PC-9 (cell line): ENCODE measurements at regions of chr17 and their contacts with region 1.

Region 1: GRCh38 chr17:66737524-66737923 is 97.4 kb upstream of the CACNG5 start:
- DNase-seq: no peak
- H3K4me3 ChIP-seq: no peak overlapping the region
- H3K27ac ChIP-seq: no peak overlapping the region
- H3K4me1 ChIP-seq: no peaks in the 10 kb centered on the region
- H3K27me3 ChIP-seq: no peaks in the 10 kb centered on the region
- CTCF ChIP-seq: no peak

Region 2: DNA sequence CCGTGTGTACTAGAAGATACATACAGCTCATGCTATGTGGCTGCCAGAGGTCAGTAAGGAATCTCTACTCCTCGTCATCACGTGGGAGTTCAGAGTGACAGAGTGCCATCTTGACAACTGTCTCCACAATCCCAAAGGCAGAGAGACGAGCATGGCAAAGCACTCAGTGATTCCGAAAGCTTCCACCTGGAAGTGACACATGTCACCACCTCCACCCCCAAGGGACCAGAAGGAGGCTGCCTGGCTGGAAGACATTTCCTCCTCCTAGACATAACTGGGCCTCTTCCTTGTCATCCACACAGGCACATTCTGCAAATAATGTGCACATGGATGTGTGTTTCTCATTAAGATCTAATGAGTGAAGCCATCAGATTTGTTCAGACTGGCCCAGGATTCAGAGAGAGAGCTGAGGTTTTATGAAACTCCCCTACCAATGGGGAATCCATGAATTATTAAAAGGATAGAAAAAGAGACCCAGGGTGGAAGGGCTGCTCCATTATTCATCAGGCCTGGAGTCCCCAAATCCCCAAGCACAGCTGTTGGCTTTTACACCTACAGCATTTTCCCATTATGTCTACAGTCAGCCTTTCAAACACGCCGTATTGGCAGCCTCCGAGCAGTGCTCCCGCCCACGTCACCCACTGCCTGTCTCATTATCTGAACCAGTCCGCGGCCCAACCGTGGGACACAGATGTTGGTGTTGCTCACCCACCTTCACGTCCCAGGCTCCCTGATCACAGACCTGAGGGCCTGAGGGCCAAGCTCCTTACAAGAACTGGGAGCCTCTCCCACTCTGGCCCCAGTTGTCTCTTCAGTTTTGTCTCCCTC is 94.1 kb after region 1 on chr17:
- CTCF ChIA-PET with region 1: no interaction called
- POLR2A ChIA-PET with region 1: interaction called, 20 read pairs
- intact Hi-C with region 1: no loop called
- DNase-seq: no peak
- H3K4me3 ChIP-seq: no peak overlapping the region
- H3K27ac ChIP-seq: no peak overlapping the region
- H3K4me1 ChIP-seq: no peaks in the 10 kb centered on the region
- H3K27me3 ChIP-seq: peaks cover 77% of the 10 kb centered on the region
- CTCF ChIP-seq: no peak